MCF 10A (cell line): ENCODE measurements at regions of chr3 and their contacts with region 1.

Region 1: DNA sequence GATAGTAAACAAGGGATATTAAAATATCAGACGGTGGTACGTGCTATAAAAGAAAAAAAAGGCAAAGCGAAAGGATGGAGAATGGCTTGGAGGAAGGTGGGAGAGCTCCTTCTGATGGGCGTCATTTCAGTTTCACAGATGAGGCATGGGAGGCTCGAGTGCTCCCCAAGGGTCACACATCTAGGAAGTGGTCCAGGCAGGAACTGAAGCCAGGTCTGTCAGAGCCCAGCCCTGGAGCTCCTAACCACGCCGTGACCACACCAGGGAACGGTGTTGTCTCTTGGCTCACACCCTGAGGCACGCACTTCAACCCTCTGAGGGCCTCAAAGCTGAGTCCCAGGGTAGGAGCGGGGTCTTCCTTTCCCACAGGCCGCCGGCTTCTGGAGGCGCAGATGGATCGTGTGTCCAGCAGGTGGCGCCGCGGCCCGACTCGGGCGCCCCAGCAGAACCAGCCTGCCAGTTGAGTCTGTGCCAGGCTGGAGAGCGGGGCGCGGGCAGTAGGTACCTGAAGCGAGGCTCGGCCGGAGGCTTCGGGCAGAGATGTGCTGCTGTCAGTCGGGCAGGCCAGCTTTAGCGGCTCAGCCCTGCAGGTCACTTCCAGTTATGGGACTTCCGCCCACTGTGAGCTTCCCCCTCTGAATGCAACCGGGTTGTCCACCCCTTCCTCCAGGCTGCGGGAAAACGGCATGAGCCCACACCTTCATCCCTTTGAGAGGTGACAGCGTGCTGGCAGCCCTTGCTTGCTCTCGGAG is 68.1 kb downstream of the SLC6A1 start:
- DNase-seq: peak; percentile 78
- H3K4me3 Mint-ChIP-seq: no peak overlapping the region
- H3K27ac Mint-ChIP-seq: no peak overlapping the region
- H3K4me1 Mint-ChIP-seq: no peaks in the 10 kb centered on the region
- H3K27me3 Mint-ChIP-seq: peaks cover 18% of the 10 kb centered on the region
- CTCF ChIP-seq: peak; percentile 95

Region 2: DNA sequence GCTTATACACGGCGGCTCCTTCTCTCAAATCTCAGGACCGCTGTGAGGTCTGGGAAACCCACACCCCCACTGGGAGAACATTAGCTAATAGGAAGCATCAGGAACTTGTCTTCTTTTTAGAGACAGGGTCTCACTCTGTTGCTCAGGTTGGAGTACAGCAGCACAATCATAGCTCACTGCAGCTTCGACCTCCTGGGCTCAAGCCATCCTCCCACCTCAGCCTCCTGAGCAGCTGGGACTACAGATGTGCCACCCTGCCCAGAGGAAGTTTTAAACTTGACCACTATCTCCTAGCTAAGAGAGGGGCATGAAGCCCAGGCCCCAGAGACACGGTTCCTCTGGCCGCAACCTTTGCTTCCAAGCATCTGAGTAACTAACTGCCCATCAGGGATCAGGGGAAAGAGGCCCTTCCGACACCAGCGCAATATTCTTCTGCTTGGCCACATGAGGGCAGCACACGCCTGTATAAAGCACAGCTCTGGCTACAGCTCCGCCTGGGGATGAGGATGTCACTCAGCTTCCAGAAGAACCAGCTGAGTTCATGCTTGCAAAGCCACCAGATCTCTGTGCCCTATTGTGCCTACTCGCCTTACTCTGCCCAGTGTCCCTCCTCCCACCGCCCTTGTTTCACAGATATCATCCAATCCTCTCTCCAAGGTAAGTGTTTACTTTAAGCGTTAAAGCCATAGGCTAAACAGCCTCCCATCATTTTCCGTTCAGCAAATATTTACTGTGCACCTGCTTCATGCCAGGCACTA is 302.2 kb before region 1 on chr3:
- CTCF ChIA-PET with region 1: interaction called, 138 read pairs
- POLR2A ChIA-PET with region 1: no interaction called
- intact Hi-C with region 1: loop called (anchors 1 kb)
- DNase-seq: peak; percentile 65
- H3K4me3 Mint-ChIP-seq: no peak overlapping the region
- H3K27ac Mint-ChIP-seq: no peak overlapping the region
- H3K4me1 Mint-ChIP-seq: no peaks in the 10 kb centered on the region
- H3K27me3 Mint-ChIP-seq: peaks cover 13% of the 10 kb centered on the region
- CTCF ChIP-seq: peak; percentile 85

Region 3: GRCh38 chr3:11071096-11071755 is 10.6 kb after region 1 on chr3:
- CTCF ChIA-PET with region 1: interaction called, 40 read pairs
- POLR2A ChIA-PET with region 1: no interaction called
- intact Hi-C with region 1: no loop called
- DNase-seq: no peak
- H3K4me3 Mint-ChIP-seq: no peak overlapping the region
- H3K27ac Mint-ChIP-seq: no peak overlapping the region
- H3K4me1 Mint-ChIP-seq: peaks cover 6% of the 10 kb centered on the region
- H3K27me3 Mint-ChIP-seq: no peaks in the 10 kb centered on the region
- CTCF ChIP-seq: no peak

Region 4: GRCh38 chr3:11096266-11097135 is 35.8 kb after region 1 on chr3:
- CTCF ChIA-PET with region 1: interaction called, 11 read pairs
- POLR2A ChIA-PET with region 1: interaction called, 3 read pairs
- intact Hi-C with region 1: no loop called
- DNase-seq: peak; percentile 95
- H3K4me3 Mint-ChIP-seq: peak overlapping the region; percentile 71
- H3K27ac Mint-ChIP-seq: peak overlapping the region; percentile 78
- H3K4me1 Mint-ChIP-seq: peaks cover 11% of the 10 kb centered on the region
- H3K27me3 Mint-ChIP-seq: no peaks in the 10 kb centered on the region
- CTCF ChIP-seq: peak; percentile 1

Region 5: GRCh38 chr3:11155341-11156025 is 94.8 kb after region 1 on chr3:
- CTCF ChIA-PET with region 1: interaction called, 66 read pairs
- POLR2A ChIA-PET with region 1: interaction called, 4 read pairs
- intact Hi-C with region 1: loop called (anchors 1 kb)
- DNase-seq: peak; percentile 79
- H3K4me3 Mint-ChIP-seq: peak overlapping the region; percentile 48
- H3K27ac Mint-ChIP-seq: peak overlapping the region; percentile 9
- H3K4me1 Mint-ChIP-seq: peaks cover 22% of the 10 kb centered on the region
- H3K27me3 Mint-ChIP-seq: no peaks in the 10 kb centered on the region
- CTCF ChIP-seq: peak; percentile 46

Region 6: DNA sequence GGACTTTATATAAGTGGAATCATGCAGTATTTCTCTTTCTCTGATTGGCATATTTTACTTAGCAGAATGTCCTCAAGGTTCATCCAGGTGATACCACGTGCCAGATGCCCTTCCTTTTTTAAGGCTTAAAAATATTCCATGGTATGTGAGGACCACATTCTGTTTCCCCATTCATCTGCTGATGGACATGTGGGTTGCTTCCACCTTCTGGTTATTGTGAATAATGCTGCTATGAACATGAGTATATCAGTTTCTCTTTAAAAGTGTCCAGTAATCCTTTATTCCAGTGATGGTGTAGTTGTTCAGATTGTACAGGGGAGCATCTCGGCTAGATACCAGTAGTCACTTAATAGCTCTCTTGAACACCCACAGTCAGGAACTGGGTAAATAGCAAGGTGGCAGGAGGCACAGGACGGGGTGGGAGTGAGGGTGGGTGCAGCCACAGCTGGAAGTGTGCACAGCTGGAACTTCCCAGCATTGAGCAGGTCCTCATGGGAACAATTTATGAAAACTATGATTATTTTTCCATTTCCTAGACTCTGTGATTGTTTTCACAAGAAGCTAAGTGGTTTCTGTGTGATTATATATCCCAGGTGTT is 161.2 kb after region 1 on chr3:
- CTCF ChIA-PET with region 1: interaction called, 13 read pairs
- POLR2A ChIA-PET with region 1: no interaction called
- intact Hi-C with region 1: loop called (anchors 5 kb)
- DNase-seq: no peak
- H3K4me3 Mint-ChIP-seq: no peak overlapping the region
- H3K27ac Mint-ChIP-seq: no peak overlapping the region
- H3K4me1 Mint-ChIP-seq: peaks cover 14% of the 10 kb centered on the region
- H3K27me3 Mint-ChIP-seq: no peaks in the 10 kb centered on the region
- CTCF ChIP-seq: peak; percentile 12

Region 7: GRCh38 chr3:11350374-11350773 is 289.7 kb after region 1 on chr3:
- CTCF ChIA-PET with region 1: interaction called, 12 read pairs
- POLR2A ChIA-PET with region 1: no interaction called
- intact Hi-C with region 1: no loop called
- DNase-seq: peak; percentile 17
- H3K4me3 Mint-ChIP-seq: no peak overlapping the region
- H3K27ac Mint-ChIP-seq: no peak overlapping the region
- H3K4me1 Mint-ChIP-seq: peaks cover 18% of the 10 kb centered on the region
- H3K27me3 Mint-ChIP-seq: no peaks in the 10 kb centered on the region
- CTCF ChIP-seq: no peak

Region 8: GRCh38 chr3:11392014-11392859 is 331.6 kb after region 1 on chr3:
- CTCF ChIA-PET with region 1: no interaction called
- POLR2A ChIA-PET with region 1: no interaction called
- intact Hi-C with region 1: no loop called
- DNase-seq: peak; percentile 79
- H3K4me3 Mint-ChIP-seq: no peak overlapping the region
- H3K27ac Mint-ChIP-seq: no peak overlapping the region
- H3K4me1 Mint-ChIP-seq: peaks cover 29% of the 10 kb centered on the region
- H3K27me3 Mint-ChIP-seq: no peaks in the 10 kb centered on the region
- CTCF ChIP-seq: no peak